MCF 10A (cell line): ENCODE measurements at regions of chr5 and their contacts with region 1.

Region 1: DNA sequence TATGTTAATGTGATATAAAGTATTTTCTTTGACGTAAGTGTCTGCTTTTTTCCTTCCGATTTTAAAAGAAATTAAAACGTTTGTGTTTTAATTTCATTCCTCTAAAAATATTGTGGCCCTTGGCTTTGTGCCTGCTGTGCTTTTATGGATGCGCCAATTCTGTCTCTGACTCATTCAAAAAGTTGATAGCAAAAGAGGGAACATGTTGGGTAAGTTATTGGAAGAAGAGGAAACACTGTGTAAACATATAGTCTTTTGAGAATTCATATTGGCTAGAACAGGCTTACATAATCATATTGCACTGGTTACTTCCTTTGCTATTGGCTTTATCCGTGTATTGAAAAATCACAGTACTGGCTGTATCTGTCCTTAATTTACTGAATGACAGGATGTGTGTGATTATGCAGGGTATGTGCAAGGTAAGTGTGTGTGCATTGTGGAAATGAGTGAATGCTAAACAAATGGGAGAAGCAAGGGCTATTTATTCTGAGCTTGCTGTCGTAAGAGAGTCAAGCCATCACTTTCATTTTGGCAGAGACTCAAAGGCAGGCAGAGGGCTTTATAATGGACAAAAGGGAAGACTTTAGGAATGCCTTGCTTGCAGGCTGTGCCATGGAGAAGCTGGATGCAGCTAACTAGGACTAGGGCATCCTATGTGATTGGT is 67.8 kb downstream of the SGCD start:
- DNase-seq: peak; percentile 79
- H3K4me3 Mint-ChIP-seq: no peak overlapping the region
- H3K27ac Mint-ChIP-seq: no peak overlapping the region
- H3K4me1 Mint-ChIP-seq: peaks cover 54% of the 10 kb centered on the region
- H3K27me3 Mint-ChIP-seq: no peaks in the 10 kb centered on the region
- CTCF ChIP-seq: no peak

Region 2: GRCh38 chr5:156340893-156341292 is 53.9 kb before region 1 on chr5:
- CTCF ChIA-PET with region 1: no interaction called
- POLR2A ChIA-PET with region 1: no interaction called
- intact Hi-C with region 1: no loop called
- DNase-seq: no peak
- H3K4me3 Mint-ChIP-seq: no peak overlapping the region
- H3K27ac Mint-ChIP-seq: no peak overlapping the region
- H3K4me1 Mint-ChIP-seq: no peaks in the 10 kb centered on the region
- H3K27me3 Mint-ChIP-seq: no peaks in the 10 kb centered on the region
- CTCF ChIP-seq: no peak

Region 3: GRCh38 chr5:156361436-156362109 is 33.2 kb before region 1 on chr5:
- CTCF ChIA-PET with region 1: interaction called, 4 read pairs
- POLR2A ChIA-PET with region 1: interaction called, 9 read pairs
- intact Hi-C with region 1: loop called (anchors 2 kb)
- DNase-seq: no peak
- H3K4me3 Mint-ChIP-seq: no peak overlapping the region
- H3K27ac Mint-ChIP-seq: no peak overlapping the region
- H3K4me1 Mint-ChIP-seq: peaks cover 22% of the 10 kb centered on the region
- H3K27me3 Mint-ChIP-seq: no peaks in the 10 kb centered on the region
- CTCF ChIP-seq: no peak

Region 4: GRCh38 chr5:156383510-156384265 is 11.1 kb before region 1 on chr5:
- CTCF ChIA-PET with region 1: interaction called, 3 read pairs
- POLR2A ChIA-PET with region 1: interaction called, 15 read pairs
- intact Hi-C with region 1: no loop called
- DNase-seq: peak; percentile 55
- H3K4me3 Mint-ChIP-seq: no peak overlapping the region
- H3K27ac Mint-ChIP-seq: peak overlapping the region; percentile 26
- H3K4me1 Mint-ChIP-seq: peaks cover 31% of the 10 kb centered on the region
- H3K27me3 Mint-ChIP-seq: no peaks in the 10 kb centered on the region
- CTCF ChIP-seq: no peak

Region 5: GRCh38 chr5:156460471-156460870 is 65.7 kb after region 1 on chr5:
- CTCF ChIA-PET with region 1: no interaction called
- POLR2A ChIA-PET with region 1: no interaction called
- intact Hi-C with region 1: no loop called
- DNase-seq: no peak
- H3K4me3 Mint-ChIP-seq: no peak overlapping the region
- H3K27ac Mint-ChIP-seq: no peak overlapping the region
- H3K4me1 Mint-ChIP-seq: no peaks in the 10 kb centered on the region
- H3K27me3 Mint-ChIP-seq: no peaks in the 10 kb centered on the region
- CTCF ChIP-seq: no peak